CD14-positive monocyte (primary cell): ENCODE measurements at regions of chr22 and their contacts with region 1.

Region 1: DNA sequence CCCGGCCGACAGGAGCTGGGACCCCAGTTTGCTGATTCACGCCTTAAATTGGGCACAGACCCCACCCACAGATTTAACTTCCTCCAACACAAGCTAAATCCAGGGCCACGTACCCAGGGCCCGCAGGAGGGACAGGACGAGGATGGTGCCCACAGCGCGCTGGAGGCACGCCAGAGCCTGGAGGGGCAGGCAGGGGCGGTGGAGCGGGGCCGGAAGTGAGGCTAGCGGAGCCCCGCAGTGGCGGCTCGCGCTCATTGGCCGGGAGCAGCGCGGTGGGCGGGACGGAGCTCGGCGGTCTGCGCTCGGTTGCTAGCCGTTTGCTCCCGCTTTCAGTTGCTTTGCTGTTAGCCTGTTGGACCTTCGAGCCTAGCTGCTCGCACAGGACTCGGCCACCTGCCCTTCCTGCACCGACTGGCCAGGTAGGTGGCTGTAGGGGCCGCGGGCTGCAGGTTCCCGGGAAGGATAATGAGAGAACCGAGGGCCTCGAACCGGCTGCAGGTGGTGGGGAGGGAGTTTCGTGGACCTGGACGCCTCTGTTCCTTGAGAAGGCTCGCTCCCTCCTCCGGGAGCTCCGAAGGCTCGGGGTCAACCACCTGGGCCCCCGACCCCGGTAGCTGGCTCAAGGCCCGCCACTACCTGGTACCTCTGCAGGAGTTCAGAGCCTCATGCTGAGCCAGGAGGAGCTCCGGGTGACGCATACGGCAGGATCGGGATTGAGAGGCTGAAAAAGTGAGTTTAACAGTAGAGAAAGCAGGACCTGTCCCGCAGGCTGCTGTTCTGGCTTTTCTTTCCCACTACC is at the start of gene CCDC134:
- DNase-seq: peak; percentile 91 to 93 (median 92)
- H3K4me3 ChIP-seq: peak within 1 kb of the TSS; percentile 66 to 97 (median 72)
- H3K4me3 Mint-ChIP-seq: peak within 1 kb of the TSS; percentile 97 to 99
- H3K27ac ChIP-seq: peak within 1 kb of the TSS; percentile 95 to 97
- H3K27ac Mint-ChIP-seq: peak within 1 kb of the TSS; percentile 98 to 99 (median 98)
- H3K4me1 ChIP-seq: peaks cover 29 to 39% of the 10 kb centered on the region in 2 donors
- H3K4me1 Mint-ChIP-seq: peaks cover 40% of the 10 kb centered on the region
- H3K27me3 ChIP-seq: no peaks in the 10 kb centered on the region
- H3K27me3 Mint-ChIP-seq: no peaks in the 10 kb centered on the region
- CTCF ChIP-seq: no peak
- polyA plus RNA-seq, gene CCDC134: 2.1 to 5.3 (median 2.4) TPM

Region 2: GRCh38 chr22:41656556-41656955 is 144.0 kb before region 1 on chr22:
- intact Hi-C with region 1: no loop called
- DNase-seq: no peak
- H3K4me3 ChIP-seq: no peak overlapping the region
- H3K4me3 Mint-ChIP-seq: no peak overlapping the region
- H3K27ac ChIP-seq: no peak overlapping the region
- H3K27ac Mint-ChIP-seq: peak overlapping the region in 1 of 7 donors; percentile 30
- H3K4me1 ChIP-seq: no peaks in the 10 kb centered on the region
- H3K4me1 Mint-ChIP-seq: no peaks in the 10 kb centered on the region
- H3K27me3 ChIP-seq: no peaks in the 10 kb centered on the region
- H3K27me3 Mint-ChIP-seq: no peaks in the 10 kb centered on the region
- CTCF ChIP-seq: no peak

Region 3: DNA sequence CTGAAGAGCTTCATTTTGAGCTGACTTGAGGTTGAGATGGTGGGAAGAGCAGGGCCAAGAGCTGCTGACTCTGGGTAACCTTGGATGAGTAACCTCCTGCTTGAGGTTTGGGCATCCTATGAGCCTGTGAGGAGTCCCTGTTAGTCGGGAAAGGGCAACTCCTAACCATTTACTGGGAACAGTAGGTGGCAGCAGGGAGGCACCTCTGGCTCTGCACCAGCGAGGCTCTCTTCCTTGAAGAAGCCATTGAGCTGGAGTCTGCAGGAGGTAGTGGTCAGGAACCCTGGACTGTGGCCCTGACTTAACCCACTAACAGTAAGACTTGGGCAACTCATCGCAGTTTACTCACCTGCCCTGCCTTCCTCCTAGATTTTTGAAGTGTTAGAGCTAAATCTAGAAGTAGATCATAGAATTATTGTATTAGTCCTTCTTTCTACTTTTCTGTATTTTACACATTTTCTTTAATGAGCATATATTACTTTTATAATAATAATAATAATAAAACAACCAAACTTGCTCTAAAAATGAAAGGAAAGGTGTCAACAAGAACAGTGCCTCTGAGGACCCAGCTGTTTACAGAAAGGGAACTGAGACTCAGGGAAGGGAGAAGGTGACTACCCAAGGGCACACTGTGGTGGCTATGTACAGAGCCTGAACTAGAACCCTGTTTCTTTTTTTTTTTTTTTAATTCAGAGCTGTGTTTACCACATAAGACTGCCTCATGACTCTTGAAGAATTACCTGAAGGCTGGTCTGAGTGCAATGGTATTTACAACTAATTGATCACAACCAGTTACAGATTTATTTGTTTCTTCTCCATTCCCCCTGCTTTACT is 53.8 kb before region 1 on chr22:
- intact Hi-C with region 1: loop called (anchors 2 to 5 kb)
- DNase-seq: peak; percentile 73 to 86 (median 79)
- H3K4me3 ChIP-seq: no peak overlapping the region
- H3K4me3 Mint-ChIP-seq: no peak overlapping the region
- H3K27ac ChIP-seq: no peak overlapping the region
- H3K27ac Mint-ChIP-seq: no peak overlapping the region
- H3K4me1 ChIP-seq: peaks cover 0 to 3% of the 10 kb centered on the region in 2 donors
- H3K4me1 Mint-ChIP-seq: peaks cover 7% of the 10 kb centered on the region
- H3K27me3 ChIP-seq: peaks cover 0 to 4% of the 10 kb centered on the region in 2 donors
- H3K27me3 Mint-ChIP-seq: peaks cover 9 to 15% (median 12%) of the 10 kb centered on the region in 3 donors
- CTCF ChIP-seq: peak; percentile 79

Region 4: GRCh38 chr22:41752011-41752970 is 48.3 kb before region 1 on chr22:
- intact Hi-C with region 1: loop called (anchors 2 to 5 kb)
- DNase-seq: peak in 1 of 3 donors; percentile 37
- H3K4me3 ChIP-seq: no peak overlapping the region
- H3K4me3 Mint-ChIP-seq: no peak overlapping the region
- H3K27ac ChIP-seq: no peak overlapping the region
- H3K27ac Mint-ChIP-seq: no peak overlapping the region
- H3K4me1 ChIP-seq: peaks cover under 1 to 1% of the 10 kb centered on the region in 2 donors
- H3K4me1 Mint-ChIP-seq: peaks cover 9% of the 10 kb centered on the region
- H3K27me3 ChIP-seq: no peaks in the 10 kb centered on the region
- H3K27me3 Mint-ChIP-seq: peaks cover 2 to 9% (median 8%) of the 10 kb centered on the region in 3 donors
- CTCF ChIP-seq: no peak

Region 5: DNA sequence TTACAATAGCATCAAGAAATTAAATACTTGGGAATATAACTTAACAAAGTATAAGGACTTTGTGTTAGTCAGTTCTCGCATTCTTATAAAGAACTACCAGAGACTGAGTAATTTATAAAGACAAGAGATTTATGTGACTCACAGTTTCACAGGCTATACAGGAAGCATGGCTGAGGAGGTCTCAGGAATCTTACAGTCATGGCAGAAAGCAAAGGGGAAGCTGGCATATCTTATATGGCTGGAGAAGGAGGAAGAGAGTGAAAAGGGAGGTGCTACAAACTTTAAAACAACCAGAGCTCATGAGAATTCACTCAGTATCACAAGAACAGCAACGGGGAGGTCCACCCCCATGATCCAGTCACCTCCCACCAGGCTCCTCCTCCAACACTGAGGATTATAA is 32.1 kb before region 1 on chr22:
- intact Hi-C with region 1: loop called in 1 of 2 experiments (anchors 5 kb)
- DNase-seq: peak; percentile 86 to 93 (median 93)
- H3K4me3 ChIP-seq: no peak overlapping the region
- H3K4me3 Mint-ChIP-seq: no peak overlapping the region
- H3K27ac ChIP-seq: peak overlapping the region; percentile 34 to 44
- H3K27ac Mint-ChIP-seq: peak overlapping the region; percentile 79 to 93 (median 87)
- H3K4me1 ChIP-seq: peaks cover 14 to 24% of the 10 kb centered on the region in 2 donors
- H3K4me1 Mint-ChIP-seq: peaks cover 25% of the 10 kb centered on the region
- H3K27me3 ChIP-seq: no peaks in the 10 kb centered on the region
- H3K27me3 Mint-ChIP-seq: peaks cover 0 to 5% (median 2%) of the 10 kb centered on the region in 3 donors
- CTCF ChIP-seq: no peak

Region 6: DNA sequence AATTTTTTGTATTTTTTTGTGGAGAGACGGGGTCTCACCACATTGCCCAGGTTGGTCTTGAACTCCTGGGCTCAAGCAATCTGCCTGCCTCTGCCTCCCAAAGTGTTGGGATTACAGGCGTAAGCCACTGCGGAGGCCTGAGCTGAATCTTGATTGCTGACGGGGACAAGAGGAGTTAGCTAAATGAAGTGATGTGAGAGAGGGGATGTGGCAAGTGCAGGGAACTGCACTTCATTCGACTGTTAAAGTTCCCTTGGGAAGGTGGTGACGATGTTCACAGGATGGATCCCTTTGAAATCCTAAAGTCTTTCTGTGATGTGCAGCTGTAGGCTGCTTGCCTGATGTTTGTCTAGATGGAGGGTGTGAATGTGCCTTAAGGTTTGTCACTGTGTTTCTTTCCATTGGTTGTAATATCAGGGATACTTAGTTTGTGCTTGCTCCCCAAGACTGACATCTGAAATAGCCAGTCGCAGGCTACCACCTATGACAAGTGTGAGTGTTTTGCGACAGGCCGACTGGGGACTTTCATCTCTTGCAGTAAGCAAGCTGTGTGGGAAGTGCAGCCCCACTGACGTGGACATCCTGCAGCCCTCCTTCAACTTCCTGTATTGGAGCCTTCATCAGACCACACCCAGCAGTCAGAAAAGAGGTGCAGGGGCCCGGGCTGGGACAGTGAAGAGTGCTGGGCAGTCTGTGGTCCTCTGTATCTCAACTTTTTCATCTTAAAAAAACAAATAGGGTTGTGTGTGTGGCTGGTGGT is 19.6 kb before region 1 on chr22:
- intact Hi-C with region 1: loop called in 1 of 2 experiments (anchors 2 kb)
- DNase-seq: peak; percentile 99 to 100 (median 99)
- H3K4me3 ChIP-seq: peak overlapping the region; percentile 28 to 56 (median 42)
- H3K4me3 Mint-ChIP-seq: peak overlapping the region; percentile 73 to 83
- H3K27ac ChIP-seq: peak overlapping the region; percentile 92 to 98
- H3K27ac Mint-ChIP-seq: peak overlapping the region; percentile 96 to 99 (median 98)
- H3K4me1 ChIP-seq: peaks cover 46 to 48% of the 10 kb centered on the region in 2 donors
- H3K4me1 Mint-ChIP-seq: peaks cover 58% of the 10 kb centered on the region
- H3K27me3 ChIP-seq: no peaks in the 10 kb centered on the region
- H3K27me3 Mint-ChIP-seq: no peaks in the 10 kb centered on the region
- CTCF ChIP-seq: no peak

Region 7: DNA sequence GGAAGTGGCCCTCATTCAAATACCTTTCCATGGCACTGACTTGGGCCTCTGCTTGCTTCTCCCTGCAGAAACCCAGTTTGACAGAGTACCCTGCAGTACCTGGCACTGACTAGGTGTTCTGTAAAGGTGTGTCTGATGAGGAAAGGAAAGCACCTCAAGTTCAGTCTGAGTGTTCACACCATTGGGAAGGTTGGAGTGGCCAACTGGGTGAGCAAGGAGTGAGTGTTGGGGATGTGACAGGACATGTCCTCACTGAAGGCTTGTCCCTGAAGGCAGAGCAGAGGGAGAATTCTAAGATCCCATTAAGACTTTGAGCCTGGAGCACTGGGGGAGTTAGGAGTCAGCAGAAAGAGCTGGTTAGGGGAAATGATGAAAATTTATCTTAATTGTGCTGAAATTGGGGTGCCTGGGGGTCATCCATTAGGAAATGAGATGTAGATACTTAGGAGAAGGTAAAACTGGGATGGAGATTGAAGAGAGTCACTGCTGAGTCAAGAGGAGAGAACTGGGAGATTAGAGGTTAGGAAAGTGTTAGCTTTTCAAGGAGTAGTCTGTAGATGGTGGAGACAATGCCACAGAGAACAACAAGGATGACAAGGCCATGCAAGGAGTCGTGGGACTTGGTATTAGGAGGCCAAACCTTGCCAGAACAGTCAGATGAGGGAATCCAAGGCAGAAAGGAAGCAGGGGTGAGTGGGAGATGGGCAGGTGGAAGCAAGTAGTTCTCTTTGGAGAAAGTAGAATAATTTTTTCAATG is 38.5 kb after region 1 on chr22:
- intact Hi-C with region 1: loop called in 1 of 2 experiments (anchors 5 kb)
- DNase-seq: no peak
- H3K4me3 ChIP-seq: no peak overlapping the region
- H3K4me3 Mint-ChIP-seq: no peak overlapping the region
- H3K27ac ChIP-seq: peak overlapping the region in 1 of 2 donors; percentile 21
- H3K27ac Mint-ChIP-seq: peak overlapping the region in 4 of 7 donors; percentile 1 to 63 (median 20)
- H3K4me1 ChIP-seq: peaks cover 8 to 9% of the 10 kb centered on the region in 2 donors
- H3K4me1 Mint-ChIP-seq: peaks cover 21% of the 10 kb centered on the region
- H3K27me3 ChIP-seq: no peaks in the 10 kb centered on the region
- H3K27me3 Mint-ChIP-seq: peaks cover 0 to 2% (median 0%) of the 10 kb centered on the region in 3 donors
- CTCF ChIP-seq: no peak